ENCODE measurements at regions of chr11 and their contacts with region 1.

Region 1: DNA sequence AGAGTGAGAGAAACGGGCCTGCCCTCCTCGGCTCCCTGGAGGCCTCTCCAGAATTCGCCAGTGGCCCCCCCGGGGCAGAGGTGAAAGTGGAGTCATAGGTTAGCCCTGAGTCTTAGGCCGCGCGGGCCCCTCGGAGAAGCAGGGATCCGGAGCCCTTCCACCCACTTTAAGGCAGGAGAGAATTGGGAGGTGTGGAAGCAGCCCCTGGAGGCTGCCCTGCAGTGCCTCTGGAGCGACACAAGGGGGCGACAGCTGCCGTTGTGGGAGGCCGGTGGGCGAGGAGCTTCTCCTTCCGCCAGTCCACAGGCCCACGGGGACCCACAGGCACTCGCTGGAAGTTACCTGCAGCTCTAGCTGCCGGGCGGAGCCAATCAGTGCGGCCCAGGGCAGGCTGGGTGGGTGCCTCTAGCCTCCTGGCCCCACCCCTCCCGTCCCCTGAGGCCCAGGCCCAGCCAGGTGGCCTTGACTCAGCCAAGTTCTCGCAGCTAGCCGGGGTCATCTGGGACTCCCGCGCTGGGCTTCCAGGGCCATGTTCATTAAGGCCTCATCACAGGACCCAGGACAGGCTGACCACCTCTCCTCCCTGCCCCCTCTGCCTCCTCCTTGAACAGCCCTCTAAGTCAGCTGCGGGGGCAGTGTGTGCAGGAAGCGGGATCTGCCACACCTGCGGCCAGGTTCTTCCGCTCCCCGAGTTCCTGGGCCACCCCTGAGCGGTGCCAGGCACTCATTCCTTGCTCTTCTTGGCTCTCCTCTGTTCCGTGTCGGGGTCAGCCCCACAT is 5.0 kb downstream of the DGKZ start:
- DNase-seq: peak; percentile 75 to 89 (median 84)
- ATAC-seq: peak; percentile 76
- H3K4me3 ChIP-seq: peak overlapping the region; percentile 37
- H3K27ac ChIP-seq: peak overlapping the region; percentile 60; the same call in 2 of the 3 replicates
- H3K4me1 ChIP-seq: peaks cover 39 to 58% of the 10 kb centered on the region in 2 experiments
- H3K27me3 ChIP-seq: no peaks in the 10 kb centered on the region
- CTCF ChIP-seq: peak; percentile 93 to 96 (median 94)
- EP300 ChIP-seq: no peak
- POLR2A ChIP-seq: no peak; the same call in 1 of the 2 replicates
- RAD21 ChIP-seq: peak; percentile 79 to 87

Region 2: GRCh38 chr11:45511361-45511965 is 840.8 kb before region 1 on chr11:
- CTCF ChIA-PET with region 1: no interaction called
- POLR2A ChIA-PET with region 1: no interaction called
- in situ Hi-C with region 1: no loop called
- intact Hi-C with region 1: no loop called
- DNase-seq: no peak
- ATAC-seq: no peak
- H3K4me3 ChIP-seq: no peak overlapping the region
- H3K27ac ChIP-seq: no peak overlapping the region
- H3K4me1 ChIP-seq: no peaks in the 10 kb centered on the region
- H3K27me3 ChIP-seq: no peaks in the 10 kb centered on the region; a peak in 1 of 5 replicates
- CTCF ChIP-seq: no peak
- EP300 ChIP-seq: no peak
- POLR2A ChIP-seq: no peak
- RAD21 ChIP-seq: no peak

Region 3: DNA sequence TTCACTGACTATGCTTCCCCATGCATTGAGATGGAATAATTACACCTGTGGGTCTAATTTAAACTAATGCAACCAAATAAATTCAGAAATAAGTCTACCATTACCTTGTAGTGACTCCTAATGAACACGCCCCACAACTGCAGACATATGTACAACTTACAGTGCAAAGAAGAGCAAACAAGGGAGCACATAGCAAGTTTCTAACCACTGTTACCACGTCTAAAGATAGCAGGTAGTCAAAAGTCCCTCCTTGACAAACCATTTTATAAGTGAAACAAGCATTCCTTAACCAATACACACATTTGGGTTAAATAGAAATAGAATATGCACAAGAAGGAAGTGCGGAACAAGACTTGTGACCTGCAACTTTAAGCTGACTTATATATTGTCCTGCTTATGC is 251.6 kb before region 1 on chr11:
- CTCF ChIA-PET with region 1: no interaction called
- POLR2A ChIA-PET with region 1: no interaction called
- in situ Hi-C with region 1: no loop called
- intact Hi-C with region 1: no loop called
- DNase-seq: no peak
- ATAC-seq: peak; percentile 11; the same call in 2 of the 3 replicates
- H3K4me3 ChIP-seq: no peak overlapping the region
- H3K27ac ChIP-seq: no peak overlapping the region
- H3K4me1 ChIP-seq: peaks cover 9 to 37% of the 10 kb centered on the region in 2 experiments; a peak in 4 of 5 replicates
- H3K27me3 ChIP-seq: no peaks in the 10 kb centered on the region
- CTCF ChIP-seq: no peak
- EP300 ChIP-seq: no peak
- POLR2A ChIP-seq: no peak
- RAD21 ChIP-seq: no peak

Region 4: DNA sequence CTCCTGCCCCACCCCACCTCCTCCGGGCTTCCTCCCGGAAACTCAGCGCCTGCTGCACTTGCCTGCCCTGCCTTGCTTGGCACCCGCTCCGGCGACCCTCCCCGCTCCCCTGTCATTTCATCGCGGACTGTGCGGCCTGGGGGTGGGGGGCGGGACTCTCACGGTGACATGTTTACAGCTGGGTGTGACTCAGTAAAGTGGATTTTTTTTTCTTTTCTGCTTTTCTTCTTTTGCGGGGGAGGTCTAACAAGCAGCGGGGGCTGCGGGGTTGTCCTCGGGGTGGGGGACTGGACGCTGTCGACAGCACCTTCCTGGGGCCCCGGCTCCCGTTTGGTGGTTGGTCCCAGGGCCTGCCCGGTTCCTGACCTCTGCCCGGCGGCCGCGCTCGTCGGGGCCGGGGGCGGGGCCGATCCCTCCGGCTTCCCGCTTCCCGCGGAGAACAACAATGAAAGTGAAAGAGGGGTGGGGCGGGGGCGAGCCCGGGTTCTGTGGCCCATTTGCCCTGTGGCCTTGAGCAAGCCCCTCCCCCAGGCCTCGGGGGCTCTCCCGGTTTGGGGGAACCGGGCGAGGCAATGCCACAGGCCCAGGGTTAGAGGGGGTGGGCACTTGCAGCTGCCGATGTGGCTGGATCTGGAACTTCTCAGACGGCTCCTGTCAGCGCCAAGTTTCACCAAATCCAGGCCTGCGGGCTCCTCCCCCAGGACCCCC is 28.2 kb after region 1 on chr11:
- CTCF ChIA-PET with region 1: no interaction called
- POLR2A ChIA-PET with region 1: interaction called, 4 read pairs
- in situ Hi-C with region 1: no loop called
- intact Hi-C with region 1: loop called (anchors 2 kb)
- DNase-seq: peak; percentile 86 to 90 (median 88)
- ATAC-seq: peak; percentile 62
- H3K4me3 ChIP-seq: peak overlapping the region; percentile 75
- H3K27ac ChIP-seq: peak overlapping the region; percentile 96
- H3K4me1 ChIP-seq: peaks cover 25 to 66% of the 10 kb centered on the region in 2 experiments
- H3K27me3 ChIP-seq: no peaks in the 10 kb centered on the region
- CTCF ChIP-seq: no peak
- EP300 ChIP-seq: no peak
- POLR2A ChIP-seq: peak; percentile 66
- RAD21 ChIP-seq: no peak

Region 5: DNA sequence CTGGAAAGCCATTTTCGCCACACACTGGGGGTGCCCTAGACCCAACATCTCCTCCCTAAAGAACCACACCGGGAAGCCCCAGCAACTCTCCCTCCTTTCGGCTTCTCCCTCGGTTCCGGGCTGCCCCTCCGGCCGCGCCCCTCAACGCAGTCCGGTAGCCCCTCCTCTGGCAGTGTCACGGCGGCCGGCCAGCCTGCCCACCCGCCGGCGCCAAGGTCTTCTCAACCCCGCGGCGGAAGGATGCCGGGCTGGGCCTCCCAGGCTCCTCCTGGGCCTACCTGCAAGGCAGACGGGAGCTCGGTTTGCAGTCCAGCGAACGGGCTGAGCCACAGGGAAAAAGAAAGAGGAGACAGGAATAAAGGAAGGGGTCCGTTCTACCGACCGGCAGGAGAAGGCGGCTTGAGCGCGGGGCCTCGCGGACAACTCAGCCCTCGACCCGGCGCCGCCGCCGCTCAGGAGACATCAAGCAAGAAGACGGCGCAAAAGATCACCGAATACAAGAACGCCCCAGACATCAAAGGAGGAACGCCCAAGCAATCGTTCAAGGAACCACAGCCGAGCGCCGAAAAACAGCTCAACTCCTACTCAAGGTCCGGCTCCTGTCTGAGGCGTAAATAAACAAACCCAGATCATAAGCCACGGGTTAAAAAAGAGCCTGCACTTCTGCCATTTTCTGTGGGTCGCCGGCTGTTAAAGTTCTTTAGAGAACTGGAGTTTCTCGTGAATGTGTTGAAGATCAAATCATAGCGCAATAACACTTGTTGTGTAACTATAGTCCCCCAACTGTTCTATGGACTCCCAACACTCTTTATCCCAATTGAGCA is 241.5 kb after region 1 on chr11 and contains the start of gene AMBRA1:
- CTCF ChIA-PET with region 1: no interaction called
- POLR2A ChIA-PET with region 1: no interaction called
- in situ Hi-C with region 1: no loop called
- intact Hi-C with region 1: no loop called
- DNase-seq: peak; percentile 76 to 96 (median 82)
- ATAC-seq: peak; percentile 86
- H3K4me3 ChIP-seq: peak within 1 kb of the TSS; percentile 97
- H3K27ac ChIP-seq: peak within 1 kb of the TSS; percentile 78
- H3K4me1 ChIP-seq: peaks cover 25 to 38% of the 10 kb centered on the region in 2 experiments
- H3K27me3 ChIP-seq: no peaks in the 10 kb centered on the region
- CTCF ChIP-seq: peak in 1 of 3 experiments; percentile 7; a peak in 1 of 6 replicates
- EP300 ChIP-seq: peak; percentile 61
- POLR2A ChIP-seq: peak; percentile 84
- RAD21 ChIP-seq: no peak; a peak in 1 of 4 replicates
- polyA plus RNA-seq, gene AMBRA1: 0.15 to 0.39 TPM

Region 6: DNA sequence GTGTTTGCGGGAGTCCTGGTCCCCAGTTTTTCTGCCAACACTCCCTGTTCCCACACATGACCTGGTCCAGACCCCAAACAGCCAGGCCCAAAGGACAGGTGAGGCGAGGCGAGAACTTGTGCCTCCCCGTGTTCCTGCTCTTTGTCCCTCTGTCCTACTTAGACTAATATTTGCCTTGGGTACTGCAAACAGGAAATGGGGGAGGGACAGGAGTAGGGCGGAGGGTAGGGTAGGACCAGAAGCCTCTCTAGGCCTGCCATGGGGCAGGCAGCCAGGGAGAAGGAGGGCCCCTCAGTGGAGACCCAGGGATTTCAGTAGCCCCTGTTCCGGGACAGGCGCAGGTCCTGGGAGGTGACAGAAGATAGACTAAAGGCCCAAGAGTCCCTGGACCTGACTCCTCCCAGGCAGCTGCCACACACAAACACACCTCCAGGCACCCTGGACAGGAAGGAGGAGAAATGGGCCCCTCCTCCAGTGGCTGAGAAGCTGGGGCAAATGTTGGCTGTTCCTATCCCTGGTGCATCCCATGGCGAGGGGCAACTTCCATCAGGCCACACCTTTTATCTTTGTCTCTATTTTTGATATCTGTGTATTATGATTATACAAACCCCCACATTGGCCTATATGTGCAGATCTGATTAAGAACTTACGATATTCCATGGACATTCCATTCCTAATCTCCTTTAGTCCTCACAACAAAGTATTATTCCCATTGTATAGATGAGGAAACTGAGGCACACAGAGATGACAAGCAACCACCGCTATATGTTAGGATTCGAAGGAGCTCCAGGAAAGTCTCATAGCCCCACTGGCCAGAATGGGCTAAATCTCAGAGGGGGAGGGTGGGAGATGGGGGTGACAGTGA is 366.1 kb after region 1 on chr11:
- CTCF ChIA-PET with region 1: no interaction called
- POLR2A ChIA-PET with region 1: no interaction called
- in situ Hi-C with region 1: no loop called
- intact Hi-C with region 1: no loop called
- DNase-seq: no peak
- ATAC-seq: peak; percentile 58
- H3K4me3 ChIP-seq: no peak overlapping the region
- H3K27ac ChIP-seq: no peak overlapping the region
- H3K4me1 ChIP-seq: peaks cover 4 to 17% of the 10 kb centered on the region in 2 experiments; a peak in 4 of 5 replicates
- H3K27me3 ChIP-seq: peaks cover 0 to 3% of the 10 kb centered on the region in 2 experiments; a peak in 1 of 5 replicates
- CTCF ChIP-seq: no peak
- EP300 ChIP-seq: no peak
- POLR2A ChIP-seq: no peak
- RAD21 ChIP-seq: no peak